Adrenal gland (tissue), 19 donors: ENCODE measurements at regions of chr1 and their contacts with region 1.

Region 1: DNA sequence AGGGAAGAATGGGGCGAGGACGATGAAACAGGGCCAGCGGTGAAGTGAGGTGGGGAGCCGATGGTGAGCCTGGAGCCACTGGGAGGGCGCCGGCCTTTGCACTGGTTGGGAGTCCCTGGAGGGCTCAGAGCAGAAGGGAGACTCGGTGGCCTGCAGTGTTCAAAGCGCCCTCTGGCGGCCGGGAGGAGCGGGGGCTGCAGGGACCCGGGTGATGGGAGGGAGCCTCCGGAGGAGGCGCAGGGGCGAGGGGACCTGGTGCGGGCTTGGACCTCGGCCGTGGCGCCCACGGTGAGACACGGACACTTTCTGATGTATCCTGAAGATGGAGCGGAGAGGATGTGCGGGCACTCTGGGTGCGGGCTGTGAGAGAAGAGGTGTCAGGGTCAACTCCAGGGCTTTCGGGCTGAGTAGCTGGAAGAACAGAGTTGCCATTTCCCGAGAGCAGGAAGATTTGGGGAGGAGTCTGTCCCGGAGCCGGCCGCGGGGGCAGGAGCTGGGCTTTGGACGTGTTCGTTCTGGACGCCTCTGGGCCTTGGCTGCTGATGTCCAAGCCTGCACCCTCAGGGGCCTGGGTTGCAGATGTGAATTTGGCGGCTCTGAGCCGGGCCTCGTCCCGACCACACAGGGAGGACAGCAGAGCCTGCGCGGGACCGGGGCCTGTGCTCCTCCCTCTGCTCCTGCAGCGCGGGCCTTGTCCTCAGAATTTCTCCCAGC is 29.7 kb downstream of the HEYL start:
- DNase-seq: peak in 6 of 7 donors; percentile 36 to 76 (median 53)
- H3K4me3 ChIP-seq: no peak overlapping the region
- H3K27ac ChIP-seq: peak overlapping the region in 1 of 5 donors; percentile 44
- H3K4me1 ChIP-seq: no peaks in the 10 kb centered on the region
- H3K27me3 ChIP-seq: no peaks in the 10 kb centered on the region
- CTCF ChIP-seq: peak in 5 of 6 experiments; percentile 48 to 73 (median 51)
- POLR2A ChIP-seq: no peak

Region 2: DNA sequence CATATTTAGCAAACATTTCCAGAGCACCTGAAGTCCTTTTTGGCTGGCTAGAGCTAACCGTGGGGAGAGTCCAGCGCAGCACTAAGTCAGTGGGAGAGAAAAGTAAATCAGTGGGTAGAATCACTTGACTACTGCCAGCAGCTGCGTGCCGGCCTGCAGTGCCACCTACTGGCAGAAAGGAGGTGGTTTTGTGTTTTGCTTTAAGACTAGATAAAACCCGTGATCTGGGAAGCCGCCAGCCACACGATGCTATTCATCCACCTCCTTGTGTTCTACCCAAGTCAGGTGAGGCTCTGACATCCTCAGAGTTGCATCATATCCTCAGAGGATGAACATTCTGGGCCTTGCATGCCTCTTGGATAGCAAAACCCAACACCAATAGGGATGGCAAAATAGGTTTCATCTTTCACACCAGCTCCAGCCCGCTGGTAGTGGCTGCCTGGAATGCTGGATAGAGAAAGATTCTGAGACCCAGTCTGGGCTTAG is 43.8 kb after region 1 on chr1:
- intact Hi-C with region 1: loop called (anchors 5 kb)
- DNase-seq: peak; percentile 77 to 96 (median 87)
- H3K4me3 ChIP-seq: no peak overlapping the region
- H3K27ac ChIP-seq: peak overlapping the region in 2 of 5 donors; percentile 41 to 87
- H3K4me1 ChIP-seq: peaks cover 0 to 14% of the 10 kb centered on the region in 2 donors
- H3K27me3 ChIP-seq: no peaks in the 10 kb centered on the region
- CTCF ChIP-seq: peak; percentile 82 to 94 (median 90)
- POLR2A ChIP-seq: no peak

Region 3: DNA sequence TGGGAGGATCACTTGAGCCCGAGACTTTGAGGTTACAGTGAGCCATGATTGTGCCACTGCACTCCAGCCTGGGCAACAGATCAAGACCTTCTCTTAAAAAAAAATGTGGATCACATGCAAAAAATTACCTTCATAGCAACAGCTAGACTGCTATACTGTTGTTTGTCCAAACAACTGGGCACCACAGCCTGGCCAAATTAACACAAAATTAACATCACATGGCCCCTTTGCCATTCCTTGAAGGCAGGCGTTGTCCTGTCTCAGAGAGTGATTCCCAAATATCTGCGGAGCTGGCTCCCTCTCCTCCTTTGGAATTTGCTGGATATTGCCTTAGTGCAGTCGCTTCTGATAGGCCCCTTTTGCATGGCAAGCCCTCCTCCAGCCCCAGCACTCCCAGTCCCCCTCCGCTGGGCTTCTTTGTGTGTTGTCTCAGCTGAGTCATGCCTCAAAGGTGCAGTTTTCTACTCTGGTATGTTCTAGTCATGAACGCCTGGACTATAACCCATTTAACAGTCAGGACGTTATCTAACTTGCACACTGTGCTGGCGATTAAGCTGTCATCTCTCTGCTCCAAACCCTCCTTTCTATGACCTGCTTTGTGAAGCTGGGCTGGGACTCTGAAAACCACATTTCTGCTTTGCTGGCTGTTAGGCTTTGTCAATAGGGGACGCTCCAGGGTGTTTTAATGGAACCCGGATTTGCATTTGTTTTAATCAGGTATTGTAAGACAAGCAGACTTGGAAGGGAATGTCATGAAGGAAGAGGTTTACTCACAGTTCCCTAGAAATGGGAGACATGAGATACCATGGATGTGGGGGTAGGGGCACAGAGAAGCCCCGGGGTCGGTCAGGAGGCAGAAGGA is 101.6 kb after region 1 on chr1:
- intact Hi-C with region 1: loop called in 1 of 2 experiments (anchors 10 kb)
- DNase-seq: peak in 1 of 7 donors; percentile 48
- H3K4me3 ChIP-seq: no peak overlapping the region
- H3K27ac ChIP-seq: no peak overlapping the region
- H3K4me1 ChIP-seq: no peaks in the 10 kb centered on the region
- H3K27me3 ChIP-seq: peaks cover 5% of the 10 kb centered on the region
- CTCF ChIP-seq: no peak
- POLR2A ChIP-seq: no peak

Region 4: DNA sequence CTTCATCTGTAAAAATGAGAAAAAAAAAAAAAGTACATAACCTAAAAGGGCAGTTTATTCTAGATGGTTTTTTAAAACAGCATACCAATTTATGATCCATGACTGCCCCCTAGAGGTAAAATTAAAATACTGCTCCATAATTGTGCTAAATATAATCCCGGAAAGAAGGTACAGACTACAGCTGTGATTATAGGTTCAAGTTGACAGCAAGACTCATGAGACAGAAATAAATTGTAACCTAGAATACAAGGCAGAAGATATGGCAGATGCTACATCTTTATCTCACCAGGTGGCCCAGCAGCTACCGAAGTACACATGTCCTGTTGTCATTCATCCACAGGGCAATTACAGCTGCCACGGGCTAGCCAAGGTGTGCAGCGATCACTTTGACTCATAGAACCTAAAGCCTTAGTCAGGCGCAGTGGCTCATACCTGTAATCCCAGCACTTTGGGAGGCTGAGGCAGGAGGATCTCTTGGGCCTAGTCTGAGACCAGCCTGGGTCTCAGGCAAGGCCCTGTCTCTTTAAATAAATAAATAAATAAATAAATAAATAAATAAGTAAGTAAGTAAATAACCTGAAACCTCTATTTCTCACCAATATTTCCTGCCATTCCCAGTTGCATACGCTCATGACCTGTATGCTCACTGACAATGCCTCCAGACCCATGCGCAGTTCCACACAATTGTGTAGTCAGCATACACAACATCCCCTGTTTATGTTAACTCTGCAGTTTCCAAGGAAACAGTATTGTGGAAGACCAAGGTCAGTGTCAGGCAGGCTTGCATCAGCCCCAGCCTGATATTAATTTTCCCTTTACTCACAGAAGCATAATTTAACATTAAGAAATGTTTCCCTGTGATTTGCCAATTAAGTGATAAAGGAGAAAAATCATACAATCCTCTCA is 110.6 kb after region 1 on chr1:
- intact Hi-C with region 1: loop called (anchors 2 to 10 kb)
- DNase-seq: peak in 2 of 7 donors; percentile 32 to 66
- H3K4me3 ChIP-seq: no peak overlapping the region
- H3K27ac ChIP-seq: peak overlapping the region in 1 of 5 donors; percentile 9
- H3K4me1 ChIP-seq: no peaks in the 10 kb centered on the region
- H3K27me3 ChIP-seq: peaks cover 12% of the 10 kb centered on the region
- CTCF ChIP-seq: peak; percentile 66 to 88 (median 78)
- POLR2A ChIP-seq: no peak